PC-3 (cell line): ENCODE measurements at regions of chr20 and their contacts with region 1.

Region 1: DNA sequence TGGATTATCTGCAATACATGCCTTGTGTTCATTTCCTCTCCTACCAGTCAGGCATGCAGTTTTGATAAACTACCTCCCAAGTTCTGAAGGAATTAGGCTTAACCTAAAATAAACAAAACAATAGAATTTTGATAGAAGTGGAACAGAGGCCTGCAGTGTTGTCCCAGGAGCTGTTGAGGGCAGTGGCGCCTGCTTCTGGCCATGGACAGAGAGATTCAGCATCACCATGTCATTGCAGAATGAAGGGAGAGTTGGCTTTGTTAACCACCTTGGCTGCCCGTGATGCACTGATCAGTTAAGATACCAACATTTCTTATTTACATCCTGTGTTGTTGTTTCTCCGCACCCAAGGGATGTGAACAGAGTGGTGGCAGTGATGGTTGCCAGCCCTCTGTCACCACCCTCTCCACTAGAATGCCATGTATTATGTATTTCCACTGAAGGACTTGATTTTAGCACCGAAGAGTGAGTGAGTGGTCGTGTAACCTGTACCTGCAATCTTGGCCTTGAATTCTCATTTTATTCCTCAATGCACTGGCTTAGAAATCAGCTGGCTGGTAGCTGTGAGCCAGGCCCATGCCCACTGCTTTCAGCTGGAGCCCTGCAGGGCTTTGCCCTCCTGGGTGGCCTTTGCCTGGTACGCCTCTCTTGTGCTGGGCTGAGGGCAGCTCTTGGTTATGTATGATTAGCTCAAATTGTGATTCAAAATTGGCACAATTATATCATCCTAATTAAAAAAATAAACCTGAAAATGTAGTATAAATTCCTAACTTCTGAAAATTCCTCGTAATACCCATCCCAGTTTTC is 56.5 kb downstream of the SHLD1 start:
- DNase-seq: peak; percentile 22
- ATAC-seq: no peak
- H3K4me3 ChIP-seq: no peak overlapping the region
- H3K27ac ChIP-seq: no peak overlapping the region
- H3K4me1 ChIP-seq: peaks cover 6% of the 10 kb centered on the region
- H3K27me3 ChIP-seq: no peaks in the 10 kb centered on the region
- CTCF ChIP-seq: peak; percentile 64

Region 2: GRCh38 chr20:5933802-5934436 is 127.3 kb after region 1 on chr20:
- CTCF ChIA-PET with region 1: no interaction called
- POLR2A ChIA-PET with region 1: no interaction called
- intact Hi-C with region 1: loop called (anchors 5 kb)
- DNase-seq: peak; percentile 62
- ATAC-seq: peak; percentile 86
- H3K4me3 ChIP-seq: no peak overlapping the region
- H3K27ac ChIP-seq: no peak overlapping the region
- H3K4me1 ChIP-seq: no peaks in the 10 kb centered on the region
- H3K27me3 ChIP-seq: 0 out of 2 replicates have a peak, but pooled peaks cover 4% of the 10 kb centered on the region
- CTCF ChIP-seq: peak; percentile 78